Transverse colon (tissue), 4 donors: ENCODE measurements at regions of chr16 and their contacts with region 1.

Region 1: DNA sequence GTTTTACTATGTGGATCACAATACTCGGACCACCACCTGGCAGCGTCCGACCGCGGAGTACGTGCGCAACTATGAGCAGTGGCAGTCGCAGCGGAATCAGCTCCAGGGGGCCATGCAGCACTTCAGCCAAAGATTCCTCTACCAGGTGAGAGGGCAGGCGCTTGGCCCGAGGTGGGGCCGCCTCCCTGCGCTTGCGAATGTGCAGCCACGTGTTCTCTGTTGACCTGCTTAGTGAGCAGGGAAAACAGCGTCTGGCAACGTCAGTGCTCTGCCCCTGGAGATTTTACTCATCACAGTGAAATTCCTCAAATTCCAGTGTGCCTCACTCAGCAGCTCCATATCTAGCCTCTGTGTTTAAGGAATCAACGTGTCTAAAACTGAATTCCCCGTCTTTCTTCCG is 33.4 kb upstream of the CLEC18A start:
- DNase-seq: no peak
- H3K4me3 ChIP-seq: no peak overlapping the region
- H3K27ac ChIP-seq: no peak overlapping the region
- H3K4me1 ChIP-seq: no peaks in the 10 kb centered on the region
- H3K27me3 ChIP-seq: no peaks in the 10 kb centered on the region
- CTCF ChIP-seq: no peak
- EP300 ChIP-seq: no peak
- POLR2A ChIP-seq: no peak

Region 2: DNA sequence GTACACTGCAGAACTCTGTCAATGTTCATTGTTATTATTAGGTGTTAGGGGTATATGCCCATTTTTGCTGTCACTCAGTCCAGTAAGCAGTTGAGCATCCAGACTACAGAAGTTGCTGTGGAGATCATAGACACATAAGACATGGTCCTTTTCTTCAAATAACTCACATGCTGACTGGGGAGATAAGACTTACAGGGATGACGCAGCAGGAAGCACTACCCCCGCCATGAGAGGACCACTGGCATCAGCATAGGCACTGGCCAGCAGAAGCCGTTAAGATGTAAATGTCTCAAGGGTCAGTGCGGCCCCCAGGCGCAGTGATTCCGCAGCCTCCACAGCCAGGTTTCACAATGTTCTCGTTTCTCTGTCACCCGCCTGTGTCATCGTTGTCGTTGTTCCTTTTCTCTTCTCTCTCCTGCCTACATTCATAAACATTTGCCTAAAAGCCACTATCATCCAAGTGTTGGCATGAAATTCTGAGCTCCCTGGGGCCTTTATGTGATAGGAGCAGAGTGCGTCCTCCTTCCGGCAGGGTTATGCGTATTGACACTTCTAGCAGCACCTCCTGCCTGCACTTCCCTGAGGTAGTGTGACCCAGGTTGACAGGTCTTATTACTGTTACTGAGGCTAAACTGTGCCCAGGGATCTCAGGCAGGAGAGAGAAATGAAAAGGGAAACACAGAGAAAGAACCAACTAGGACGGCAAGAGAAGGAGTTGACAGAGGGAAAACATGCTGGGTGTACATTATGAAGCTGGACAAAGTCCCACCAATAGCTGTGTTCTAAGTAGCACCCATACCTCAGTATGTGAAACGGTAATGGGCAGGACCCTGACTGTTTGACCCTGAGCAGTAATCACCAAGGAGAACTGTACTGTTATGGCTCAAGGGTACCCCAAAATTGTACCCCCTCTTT is 1056.5 kb before region 1 on chr16:
- in situ Hi-C with region 1: no loop called
- intact Hi-C with region 1: no loop called
- DNase-seq: no peak
- H3K4me3 ChIP-seq: no peak overlapping the region
- H3K27ac ChIP-seq: no peak overlapping the region
- H3K4me1 ChIP-seq: no peaks in the 10 kb centered on the region
- H3K27me3 ChIP-seq: no peaks in the 10 kb centered on the region
- CTCF ChIP-seq: no peak
- EP300 ChIP-seq: no peak
- POLR2A ChIP-seq: no peak

Region 3: GRCh38 chr16:69938981-69939820 is 21.5 kb after region 1 on chr16:
- in situ Hi-C with region 1: no loop called
- intact Hi-C with region 1: loop called (anchors 1 kb)
- DNase-seq: no peak
- H3K4me3 ChIP-seq: no peak overlapping the region
- H3K27ac ChIP-seq: no peak overlapping the region
- H3K4me1 ChIP-seq: no peaks in the 10 kb centered on the region
- H3K27me3 ChIP-seq: no peaks in the 10 kb centered on the region
- CTCF ChIP-seq: no peak
- EP300 ChIP-seq: no peak
- POLR2A ChIP-seq: no peak